Activated CD4-positive, alpha-beta memory T cell treated with anti-CD3 and anti-CD28 coated beads for 36 hours (primary cell): ENCODE measurements at regions of chr10 and their contacts with region 1.

Region 1: GRCh38 chr10:74628136-74628535 is 198.3 kb upstream of the KAT6B start:
- DNase-seq: no peak
- H3K4me3 Mint-ChIP-seq: no peak overlapping the region
- H3K27ac Mint-ChIP-seq: no peak overlapping the region
- H3K4me1 Mint-ChIP-seq: no peaks in the 10 kb centered on the region
- H3K27me3 Mint-ChIP-seq: no peaks in the 10 kb centered on the region

Region 2: GRCh38 chr10:74677951-74678350 is 49.8 kb after region 1 on chr10:
- CTCF ChIA-PET with region 1: no interaction called
- POLR2A ChIA-PET with region 1: no interaction called
- intact Hi-C with region 1: loop called (anchors 5 kb)
- DNase-seq: no peak
- H3K4me3 Mint-ChIP-seq: no peak overlapping the region
- H3K27ac Mint-ChIP-seq: no peak overlapping the region
- H3K4me1 Mint-ChIP-seq: peaks cover 11% of the 10 kb centered on the region
- H3K27me3 Mint-ChIP-seq: no peaks in the 10 kb centered on the region

Region 3: DNA sequence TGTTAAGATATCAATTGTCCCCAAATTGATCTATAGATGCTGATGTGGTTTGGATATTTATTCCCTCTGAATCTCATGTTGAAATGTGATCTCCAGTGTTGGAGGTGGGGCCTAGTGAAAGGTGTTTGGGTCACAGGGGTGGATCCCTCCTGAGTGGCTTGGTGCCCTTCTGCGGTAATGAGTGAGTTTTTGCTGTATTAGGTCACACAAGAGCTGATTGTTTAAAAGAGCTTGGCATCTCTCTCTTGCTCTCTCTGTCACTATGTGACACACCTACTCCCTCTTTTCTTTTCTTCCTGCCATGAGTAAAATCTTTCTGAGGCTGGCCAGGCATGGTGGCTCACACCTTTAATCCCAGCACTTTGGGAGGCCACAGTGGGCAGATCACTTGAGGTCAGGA is 100.1 kb after region 1 on chr10:
- CTCF ChIA-PET with region 1: no interaction called
- POLR2A ChIA-PET with region 1: no interaction called
- intact Hi-C with region 1: no loop called
- DNase-seq: no peak
- H3K4me3 Mint-ChIP-seq: no peak overlapping the region
- H3K27ac Mint-ChIP-seq: no peak overlapping the region
- H3K4me1 Mint-ChIP-seq: no peaks in the 10 kb centered on the region
- H3K27me3 Mint-ChIP-seq: no peaks in the 10 kb centered on the region

Region 4: DNA sequence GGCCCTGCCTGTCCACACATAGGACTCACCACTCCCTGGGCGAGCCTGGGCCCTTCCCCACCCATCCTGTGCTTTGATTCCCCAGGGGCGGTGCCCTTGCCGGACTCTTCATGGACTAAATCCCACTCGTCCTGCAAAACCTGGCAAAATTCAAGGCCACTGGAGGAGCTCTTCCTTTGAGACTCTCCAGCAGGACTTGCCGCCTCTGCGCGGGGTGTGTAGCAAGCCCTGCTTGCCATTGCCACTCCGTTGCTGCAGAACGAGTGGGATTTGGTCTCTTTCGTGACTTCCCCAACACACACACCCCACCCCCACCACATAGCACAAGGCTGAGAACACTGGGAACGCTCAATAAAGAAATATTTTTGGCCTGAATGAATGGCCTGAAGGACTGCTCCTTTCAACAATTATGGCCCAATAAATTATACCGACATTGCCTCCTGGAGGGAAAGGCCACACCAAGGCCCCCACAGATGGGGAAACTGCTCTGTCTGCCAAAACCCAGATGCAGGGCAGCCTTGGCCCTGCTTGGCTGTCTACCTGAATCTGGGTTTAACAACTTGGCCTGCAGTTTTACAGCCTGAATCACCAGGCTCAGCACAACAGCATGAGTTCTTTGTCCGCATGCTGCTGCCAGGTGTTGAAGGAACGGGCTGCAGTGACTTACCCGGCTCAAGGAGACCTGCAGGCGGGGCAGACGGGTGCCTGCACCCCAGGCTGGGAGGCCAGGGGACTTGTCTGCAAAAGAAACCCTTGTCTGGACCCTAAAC is 125.5 kb after region 1 on chr10:
- CTCF ChIA-PET with region 1: no interaction called
- POLR2A ChIA-PET with region 1: no interaction called
- intact Hi-C with region 1: no loop called
- DNase-seq: no peak
- H3K4me3 Mint-ChIP-seq: no peak overlapping the region
- H3K27ac Mint-ChIP-seq: no peak overlapping the region
- H3K4me1 Mint-ChIP-seq: peaks cover 7% of the 10 kb centered on the region
- H3K27me3 Mint-ChIP-seq: no peaks in the 10 kb centered on the region